OCI-LY7 (cell line): ENCODE measurements at regions of chr11 and their contacts with region 1.

Region 1: DNA sequence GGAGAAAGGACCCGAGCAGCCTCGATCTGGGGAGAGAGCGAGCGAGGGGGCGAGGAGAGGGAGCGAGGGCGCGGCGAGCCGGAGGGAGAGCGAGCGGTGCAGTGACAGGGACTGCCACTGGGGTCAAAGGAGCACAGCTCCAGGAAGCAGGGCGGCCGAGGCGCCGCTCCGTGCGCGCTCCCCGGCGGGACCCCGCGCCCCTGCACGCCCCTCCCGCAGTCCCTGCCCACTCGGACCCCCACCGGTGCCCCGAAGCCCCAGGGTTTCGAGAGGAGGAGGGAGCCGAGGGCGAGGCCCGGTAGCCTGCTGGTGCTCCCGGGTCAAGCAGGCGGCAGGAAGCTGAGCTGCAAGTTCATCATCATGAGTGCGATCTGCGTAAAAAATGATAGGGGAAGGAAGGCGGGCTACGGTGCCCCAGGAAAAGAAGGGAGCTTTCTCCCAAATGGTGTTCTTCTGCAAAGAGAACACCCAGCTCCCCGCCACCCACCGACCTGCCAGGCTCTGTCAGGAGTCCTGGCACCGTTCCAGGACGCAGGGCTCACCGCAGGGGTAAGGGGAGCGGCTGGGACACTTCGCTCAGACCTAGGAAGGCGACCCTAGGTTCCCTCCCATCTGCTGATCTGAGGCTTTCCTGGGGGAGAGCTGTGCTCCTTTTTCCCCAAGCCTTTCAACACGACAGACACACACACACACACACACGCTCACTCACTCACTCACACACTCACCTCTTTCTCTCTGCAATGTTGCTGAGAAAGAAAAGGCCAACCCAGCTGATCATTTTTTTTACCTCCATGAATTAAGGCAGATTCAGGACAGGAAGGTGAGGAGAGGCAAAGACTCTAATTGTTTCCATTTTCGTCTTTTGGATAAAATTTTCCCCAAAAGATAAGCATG is at the start of gene MPPED2:
- DNase-seq: no peak
- H3K4me3 ChIP-seq: no peak within 1 kb of the TSS
- H3K27ac ChIP-seq: no peak within 1 kb of the TSS
- H3K4me1 ChIP-seq: no peaks in the 10 kb centered on the region
- CTCF ChIP-seq: no peak
- total RNA-seq, gene MPPED2: not detected in 2 replicates

Region 2: GRCh38 chr11:30521297-30522042 is 65.0 kb before region 1 on chr11:
- CTCF ChIA-PET with region 1: no interaction called
- POLR2A ChIA-PET with region 1: no interaction called
- intact Hi-C with region 1: no loop called
- DNase-seq: no peak
- H3K4me3 ChIP-seq: no peak overlapping the region
- H3K27ac ChIP-seq: no peak overlapping the region
- H3K4me1 ChIP-seq: no peaks in the 10 kb centered on the region
- CTCF ChIP-seq: no peak

Region 3: DNA sequence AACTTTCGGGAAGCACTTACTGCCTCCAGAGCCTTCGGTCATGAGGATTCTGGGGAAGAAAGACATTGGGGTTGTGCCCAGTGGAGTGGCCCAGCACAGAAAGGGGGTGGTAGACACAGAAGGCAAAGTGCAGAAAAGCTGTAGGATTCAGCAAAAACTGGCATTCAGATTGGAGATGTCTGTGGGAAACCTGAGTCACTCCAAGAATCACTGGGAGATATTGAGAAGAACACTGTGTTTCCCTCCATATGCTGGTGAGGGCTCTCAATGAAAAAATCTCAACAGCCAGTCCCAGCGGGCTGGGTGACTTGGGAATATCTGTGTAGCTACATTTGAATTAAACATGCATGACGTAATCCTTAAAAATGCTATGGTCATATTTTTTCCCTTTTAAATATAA is 1443.2 kb after region 1 on chr11:
- CTCF ChIA-PET with region 1: no interaction called
- POLR2A ChIA-PET with region 1: no interaction called
- intact Hi-C with region 1: loop called (anchors 10 kb)
- DNase-seq: no peak
- H3K4me3 ChIP-seq: no peak overlapping the region
- H3K27ac ChIP-seq: no peak overlapping the region
- H3K4me1 ChIP-seq: no peaks in the 10 kb centered on the region
- CTCF ChIP-seq: no peak